CD4-positive, alpha-beta T cell (primary cell): ENCODE measurements at regions of chr16 and their contacts with region 1.

Region 1: DNA sequence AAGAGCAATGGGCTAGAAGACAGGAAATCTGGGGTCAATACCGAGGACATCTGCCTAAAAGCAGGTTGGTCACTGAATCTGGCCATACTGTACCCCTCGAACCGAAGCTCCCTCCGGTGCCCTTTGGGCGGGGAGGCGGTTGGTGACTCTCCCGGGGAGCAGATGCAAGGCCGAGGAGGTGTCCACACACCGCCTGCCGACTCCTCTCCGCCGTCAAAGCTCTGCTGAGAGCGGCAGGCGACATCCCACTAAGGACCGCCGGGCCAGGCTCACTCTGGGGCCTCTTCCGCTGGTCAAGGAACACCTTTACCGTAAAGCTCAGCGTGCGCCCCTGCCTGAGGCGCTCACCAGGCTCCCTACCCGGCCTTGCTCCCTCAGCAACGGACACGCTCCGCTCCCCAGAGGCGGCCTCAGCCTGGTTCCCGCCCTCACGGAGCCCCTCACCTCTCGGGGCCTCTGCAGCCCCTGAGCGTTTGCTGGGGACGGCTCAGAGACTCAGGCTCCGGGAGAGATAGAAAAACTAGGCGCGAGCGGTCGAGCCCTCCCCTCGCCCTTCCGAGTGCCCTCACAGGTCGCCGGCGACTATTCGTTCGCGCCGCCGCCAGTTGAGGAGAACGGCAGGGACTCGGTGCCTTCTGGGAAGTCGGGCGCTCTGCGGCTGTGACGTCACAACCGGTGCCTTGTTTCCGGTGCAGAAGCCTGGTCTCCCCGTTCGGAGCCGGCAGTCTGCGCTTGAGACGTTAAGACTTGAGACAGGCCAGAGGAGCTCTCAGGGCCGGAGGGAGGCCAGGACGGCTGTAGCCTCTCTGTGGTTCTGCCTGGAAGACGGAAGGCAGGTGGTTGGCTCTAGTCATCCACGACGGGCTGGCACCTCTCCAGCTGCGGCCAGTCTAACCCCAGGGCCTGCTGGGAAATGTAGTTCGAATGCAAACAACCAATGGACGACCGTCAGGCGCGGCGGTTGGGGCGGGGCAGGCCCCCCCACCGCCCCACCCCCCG is at the start of gene ZNF200:
- DNase-seq: peak; percentile 86 to 97 (median 90)
- ATAC-seq: peak; percentile 89
- H3K4me3 ChIP-seq: peak within 1 kb of the TSS; percentile 98
- H3K4me3 Mint-ChIP-seq: peak within 1 kb of the TSS; percentile 94
- H3K27ac ChIP-seq: peak within 1 kb of the TSS; percentile 88 to 97
- H3K27ac Mint-ChIP-seq: peak within 1 kb of the TSS; percentile 94
- H3K4me1 ChIP-seq: peaks cover 27% of the 10 kb centered on the region
- H3K4me1 Mint-ChIP-seq: peaks cover 50% of the 10 kb centered on the region
- H3K27me3 ChIP-seq: no peaks in the 10 kb centered on the region
- H3K27me3 Mint-ChIP-seq: no peaks in the 10 kb centered on the region
- CTCF ChIP-seq: no peak
- total RNA-seq, gene ZNF200: 7.0 to 7.2 TPM

Region 2: DNA sequence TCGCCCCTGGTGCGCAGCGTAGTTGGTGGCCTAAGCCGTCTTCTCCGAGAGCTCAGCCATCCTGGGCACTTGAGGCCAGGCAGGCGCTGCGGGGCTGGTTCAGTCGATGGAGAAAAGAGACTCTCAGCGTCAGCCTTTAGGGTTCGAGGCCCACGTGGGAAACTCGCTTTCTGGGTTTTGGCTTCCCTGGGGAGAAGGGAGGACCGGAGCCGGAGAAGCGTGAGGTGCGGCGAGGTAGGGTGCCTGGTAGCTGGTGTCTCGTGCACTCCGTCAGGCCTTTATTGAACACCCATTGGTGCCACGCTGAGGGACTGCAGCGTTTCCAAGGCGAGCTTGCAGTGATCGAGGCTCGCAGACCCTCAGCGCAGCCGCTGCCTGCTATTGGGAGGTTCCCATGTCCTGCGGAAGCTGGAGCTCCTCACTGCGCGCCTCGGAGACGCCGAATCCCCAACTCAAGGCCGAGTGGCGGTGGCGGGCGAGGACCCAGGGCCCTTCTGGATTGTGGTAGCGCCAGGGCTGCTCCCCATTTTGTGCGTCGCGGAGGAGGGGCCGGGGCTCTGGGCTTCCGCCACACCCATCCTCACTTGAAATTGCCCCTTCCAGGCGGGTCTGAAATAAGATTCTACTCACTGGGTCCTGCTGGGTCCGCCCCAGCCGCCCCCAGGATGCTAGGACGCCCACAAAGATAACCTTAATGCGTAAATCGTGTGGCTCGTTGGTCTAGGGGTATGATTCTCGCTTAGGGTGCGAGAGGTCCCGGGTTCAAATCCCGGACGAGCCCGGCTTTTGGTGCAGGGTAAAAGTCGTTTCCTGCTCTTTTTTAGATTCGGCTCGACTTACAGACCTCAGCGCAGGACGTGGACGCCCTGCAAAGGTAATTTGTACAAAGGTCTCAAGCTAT is 45.7 kb before region 1 on chr16:
- CTCF ChIA-PET with region 1: no interaction called
- POLR2A ChIA-PET with region 1: interaction called, 8 read pairs
- intact Hi-C with region 1: loop called in 1 of 2 experiments (anchors 5 kb)
- DNase-seq: peak in 6 of 14 experiments; percentile 7 to 59 (median 44)
- ATAC-seq: peak; percentile 44
- H3K4me3 ChIP-seq: peak overlapping the region; percentile 33
- H3K4me3 Mint-ChIP-seq: peak overlapping the region; percentile 81
- H3K27ac ChIP-seq: no peak overlapping the region
- H3K27ac Mint-ChIP-seq: peak overlapping the region; percentile 47
- H3K4me1 ChIP-seq: peaks cover 51% of the 10 kb centered on the region
- H3K4me1 Mint-ChIP-seq: peaks cover 44% of the 10 kb centered on the region
- H3K27me3 ChIP-seq: peaks cover 68 to 78% of the 10 kb centered on the region in 2 experiments
- H3K27me3 Mint-ChIP-seq: peaks cover 88% of the 10 kb centered on the region
- CTCF ChIP-seq: no peak

Region 3: GRCh38 chr16:3295783-3296182 is 60.9 kb after region 1 on chr16:
- CTCF ChIA-PET with region 1: no interaction called
- POLR2A ChIA-PET with region 1: no interaction called
- intact Hi-C with region 1: no loop called
- DNase-seq: no peak
- ATAC-seq: no peak
- H3K4me3 ChIP-seq: no peak overlapping the region
- H3K4me3 Mint-ChIP-seq: no peak overlapping the region
- H3K27ac ChIP-seq: no peak overlapping the region
- H3K27ac Mint-ChIP-seq: no peak overlapping the region
- H3K4me1 ChIP-seq: no peaks in the 10 kb centered on the region
- H3K4me1 Mint-ChIP-seq: no peaks in the 10 kb centered on the region
- H3K27me3 ChIP-seq: no peaks in the 10 kb centered on the region
- H3K27me3 Mint-ChIP-seq: no peaks in the 10 kb centered on the region
- CTCF ChIP-seq: no peak